Activated CD4-positive, alpha-beta memory T cell treated with anti-CD3 and anti-CD28 coated beads for 36 hours (primary cell): ENCODE measurements at regions of chr5 and their contacts with region 1.

Region 1: GRCh38 chr5:132019857-132020555 is 8.5 kb upstream of the ACSL6 start:
- DNase-seq: peak; percentile 91
- H3K4me3 Mint-ChIP-seq: peak overlapping the region; percentile 11
- H3K27ac Mint-ChIP-seq: peak overlapping the region; percentile 90
- H3K4me1 Mint-ChIP-seq: peaks cover 52% of the 10 kb centered on the region
- H3K27me3 Mint-ChIP-seq: peaks cover 22% of the 10 kb centered on the region

Region 2: GRCh38 chr5:131488463-131488862 is 531.5 kb before region 1 on chr5:
- CTCF ChIA-PET with region 1: interaction called, 3 read pairs
- POLR2A ChIA-PET with region 1: no interaction called
- intact Hi-C with region 1: loop called (anchors 2 kb)
- DNase-seq: no peak
- H3K4me3 Mint-ChIP-seq: peak overlapping the region; percentile 16
- H3K27ac Mint-ChIP-seq: peak overlapping the region; percentile 70
- H3K4me1 Mint-ChIP-seq: peaks cover 30% of the 10 kb centered on the region
- H3K27me3 Mint-ChIP-seq: no peaks in the 10 kb centered on the region

Region 3: DNA sequence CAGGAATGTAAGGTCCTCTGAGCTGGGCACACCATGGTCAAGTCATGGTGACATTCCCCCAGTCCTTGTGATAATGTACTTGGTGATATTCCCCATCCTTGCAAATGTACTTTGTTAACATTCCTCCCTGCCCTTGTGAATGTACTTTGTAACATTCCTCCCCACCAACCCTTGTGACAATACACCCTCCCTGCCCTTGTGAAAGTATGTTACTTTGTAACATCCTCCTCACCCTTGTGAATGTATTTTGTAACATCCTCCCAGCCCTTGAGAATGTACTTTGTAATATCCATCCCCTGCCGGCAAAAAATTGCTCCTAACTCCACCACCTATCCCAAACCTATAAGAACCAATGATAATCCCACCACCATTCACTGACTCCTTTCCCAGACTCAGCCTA is 438.3 kb before region 1 on chr5:
- CTCF ChIA-PET with region 1: no interaction called
- POLR2A ChIA-PET with region 1: no interaction called
- intact Hi-C with region 1: no loop called
- DNase-seq: no peak
- H3K4me3 Mint-ChIP-seq: no peak overlapping the region
- H3K27ac Mint-ChIP-seq: no peak overlapping the region
- H3K4me1 Mint-ChIP-seq: peaks cover 40% of the 10 kb centered on the region
- H3K27me3 Mint-ChIP-seq: no peaks in the 10 kb centered on the region

Region 4: DNA sequence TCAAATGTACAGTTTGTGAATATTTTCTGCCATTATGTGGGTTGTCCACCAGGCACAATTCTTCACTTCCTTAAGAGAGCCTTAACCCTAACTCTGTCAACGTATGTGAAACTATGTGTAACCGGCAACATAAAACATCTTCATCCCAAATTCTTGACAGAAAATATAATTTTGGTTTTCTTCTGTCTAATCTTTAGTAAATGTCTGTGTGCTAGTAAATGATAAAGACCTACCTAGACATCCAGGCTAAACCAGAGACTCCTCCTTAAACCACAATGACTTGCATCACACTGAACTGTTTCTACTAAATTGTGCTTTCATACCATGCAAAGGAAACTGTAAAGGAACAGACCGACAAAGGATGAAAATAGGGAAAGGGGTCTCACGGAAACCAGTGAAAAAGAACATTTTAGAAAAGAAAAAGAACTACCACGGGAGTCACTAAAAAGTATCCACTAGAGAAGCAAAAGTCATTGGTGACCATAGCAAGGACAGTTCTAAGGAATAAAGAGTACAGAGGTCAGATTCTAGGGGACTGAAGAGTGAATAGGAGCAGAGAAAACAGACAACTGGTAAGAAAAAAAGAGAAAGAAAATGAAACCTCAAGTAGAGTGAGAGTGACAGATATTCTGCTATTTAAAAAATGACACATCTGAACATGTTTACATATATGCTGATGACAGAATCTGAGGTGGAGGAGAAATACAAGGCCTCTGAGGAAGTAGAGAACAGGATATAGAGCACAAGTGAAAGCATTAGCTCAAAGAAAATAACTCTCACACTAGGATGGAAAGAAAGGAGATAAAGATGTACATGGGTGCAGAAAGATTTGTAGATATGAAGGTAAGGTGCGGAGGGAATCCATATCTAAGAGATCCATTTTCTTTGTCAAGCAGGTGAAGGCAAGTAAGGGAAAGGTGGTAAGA is 272.6 kb before region 1 on chr5:
- CTCF ChIA-PET with region 1: no interaction called
- POLR2A ChIA-PET with region 1: no interaction called
- intact Hi-C with region 1: loop called (anchors 5 kb)
- DNase-seq: no peak
- H3K4me3 Mint-ChIP-seq: peak overlapping the region; percentile 35
- H3K27ac Mint-ChIP-seq: peak overlapping the region; percentile 78
- H3K4me1 Mint-ChIP-seq: peaks cover 33% of the 10 kb centered on the region
- H3K27me3 Mint-ChIP-seq: no peaks in the 10 kb centered on the region

Region 5: GRCh38 chr5:131796793-131797693 is 223.0 kb before region 1 on chr5 and contains the start of gene FNIP1:
- CTCF ChIA-PET with region 1: no interaction called
- POLR2A ChIA-PET with region 1: interaction called, 4 read pairs
- intact Hi-C with region 1: loop called (anchors 1 kb)
- DNase-seq: peak; percentile 99
- H3K4me3 Mint-ChIP-seq: peak within 1 kb of the TSS; percentile 97
- H3K27ac Mint-ChIP-seq: peak within 1 kb of the TSS; percentile 84
- H3K4me1 Mint-ChIP-seq: peaks cover 33% of the 10 kb centered on the region
- H3K27me3 Mint-ChIP-seq: no peaks in the 10 kb centered on the region
- total RNA-seq, gene FNIP1: 14.0 to 15.9 TPM

Region 6: DNA sequence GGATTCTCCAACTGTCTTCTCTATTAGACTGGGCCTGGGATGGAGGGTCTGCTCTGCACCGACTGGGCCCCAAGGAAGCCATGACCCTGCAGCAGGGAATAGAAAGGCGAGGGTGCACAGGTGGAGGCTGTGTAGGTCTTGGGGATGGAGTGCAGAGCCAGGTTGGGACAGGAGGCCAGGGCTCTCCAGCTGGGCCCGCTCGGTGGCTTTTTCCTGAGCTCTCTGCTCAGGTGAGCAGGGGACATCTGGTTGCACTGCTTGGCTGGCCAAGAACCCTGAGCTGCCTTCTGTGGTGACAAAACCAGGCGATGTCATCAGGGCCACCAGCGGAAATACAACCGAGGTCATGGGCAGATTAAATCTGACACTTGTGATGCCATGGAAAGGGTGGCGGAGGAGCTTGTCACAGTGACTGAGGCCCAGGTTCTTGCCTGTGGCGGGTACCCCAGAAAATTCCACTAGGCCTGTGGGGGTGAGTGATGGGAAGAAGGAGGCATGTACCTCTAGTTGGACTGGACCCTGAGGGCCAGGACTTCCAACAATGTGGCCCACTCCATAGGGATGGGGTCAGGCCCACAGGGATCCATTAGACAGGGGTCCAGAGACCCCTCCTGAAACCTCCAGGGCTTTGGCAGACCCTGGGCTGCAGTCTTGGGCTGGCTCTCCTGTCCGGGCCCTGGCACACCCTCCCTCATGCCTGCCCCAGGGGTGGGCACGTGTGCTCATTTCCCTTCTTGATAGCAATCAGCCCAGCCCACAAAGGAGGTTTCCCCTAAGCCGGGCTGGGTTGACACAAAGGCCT is 36.0 kb after region 1 on chr5:
- CTCF ChIA-PET with region 1: interaction called, 4 read pairs
- POLR2A ChIA-PET with region 1: no interaction called
- intact Hi-C with region 1: loop called (anchors 1 kb)
- DNase-seq: peak; percentile 72
- H3K4me3 Mint-ChIP-seq: no peak overlapping the region
- H3K27ac Mint-ChIP-seq: peak overlapping the region; percentile 67
- H3K4me1 Mint-ChIP-seq: peaks cover 41% of the 10 kb centered on the region
- H3K27me3 Mint-ChIP-seq: no peaks in the 10 kb centered on the region

Region 7: DNA sequence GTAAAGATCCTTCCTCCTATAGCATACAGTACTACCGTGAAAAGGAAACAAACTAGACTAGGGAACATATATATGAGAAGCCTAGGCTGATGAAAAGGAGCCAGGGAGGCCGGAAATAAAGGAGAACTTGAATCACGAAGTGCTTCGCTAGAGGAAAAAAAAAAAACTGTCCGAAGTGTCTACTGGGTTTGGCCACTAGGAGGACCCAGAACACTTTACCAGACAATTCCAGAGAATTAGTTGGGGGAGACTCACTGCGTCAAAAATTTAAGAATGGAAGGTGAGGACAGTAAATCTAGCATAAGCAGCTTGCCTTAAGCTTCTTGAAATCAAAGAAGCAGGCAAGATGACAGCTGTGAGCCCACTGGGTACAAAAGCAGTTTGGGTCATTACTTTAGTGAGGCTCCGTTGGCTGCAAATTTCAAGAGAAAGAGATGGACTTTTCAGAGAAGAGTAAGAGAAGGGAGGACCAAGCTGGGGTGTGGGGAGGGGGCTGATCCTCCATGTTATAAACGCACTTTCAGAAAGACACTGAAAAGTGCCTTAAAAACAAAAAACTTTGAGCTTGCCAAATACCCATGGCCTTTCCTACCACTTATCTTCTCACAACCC is 160.2 kb after region 1 on chr5:
- CTCF ChIA-PET with region 1: no interaction called
- POLR2A ChIA-PET with region 1: no interaction called
- intact Hi-C with region 1: loop called (anchors 1 kb)
- DNase-seq: no peak
- H3K4me3 Mint-ChIP-seq: no peak overlapping the region
- H3K27ac Mint-ChIP-seq: peak overlapping the region; percentile 1
- H3K4me1 Mint-ChIP-seq: peaks cover 32% of the 10 kb centered on the region
- H3K27me3 Mint-ChIP-seq: no peaks in the 10 kb centered on the region